Lower leg skin (tissue), 4 donors: ENCODE measurements at regions of chr7 and their contacts with region 1.

Region 1: DNA sequence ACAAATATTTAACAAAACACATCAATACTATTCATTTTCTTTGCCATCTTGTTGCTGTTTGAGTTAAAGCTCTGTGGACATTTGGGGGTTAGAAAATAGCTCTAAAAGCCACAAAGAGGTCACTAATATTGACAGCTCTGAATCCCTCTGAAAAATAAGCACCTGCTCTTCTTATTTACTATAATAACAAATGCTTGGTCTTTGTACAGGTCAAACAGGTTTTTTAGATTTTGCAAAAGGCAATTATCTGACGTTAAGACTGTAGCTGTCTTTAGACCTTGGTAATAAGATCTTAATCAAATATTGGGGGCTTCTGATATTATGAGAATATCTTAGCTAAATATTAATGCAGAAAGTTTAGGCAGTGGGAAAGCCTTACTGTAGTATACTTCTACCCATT is 20.5 kb downstream of the HEPACAM2 start:
- DNase-seq: no peak
- H3K4me3 ChIP-seq: no peak overlapping the region
- CTCF ChIP-seq: no peak
- POLR2A ChIP-seq: no peak

Region 2: GRCh38 chr7:93015779-93016481 is 189.8 kb before region 1 on chr7:
- intact Hi-C with region 1: no loop called
- DNase-seq: no peak
- H3K4me3 ChIP-seq: no peak overlapping the region
- CTCF ChIP-seq: no peak
- POLR2A ChIP-seq: no peak

Region 3: DNA sequence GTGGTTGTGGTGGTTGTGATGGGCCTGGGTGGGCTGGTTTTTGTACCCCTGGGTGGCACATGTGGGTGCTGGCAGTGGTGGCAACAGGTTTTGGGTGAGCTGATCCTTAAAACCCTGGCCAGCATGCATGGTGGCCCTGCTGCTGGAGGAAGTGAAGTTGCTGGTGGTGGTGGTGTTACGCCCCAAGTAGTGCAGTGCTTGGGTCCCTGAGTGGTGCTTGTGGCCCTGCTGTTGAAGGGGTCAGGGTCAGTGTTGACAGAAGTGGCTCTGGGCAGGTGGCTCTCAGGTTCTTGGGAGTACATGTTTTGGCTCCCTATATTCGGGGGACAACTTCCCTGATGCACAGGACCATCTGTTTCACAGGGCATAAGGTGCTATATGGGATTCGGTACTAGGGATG is 119.0 kb before region 1 on chr7:
- intact Hi-C with region 1: loop called (anchors 5 kb)
- DNase-seq: no peak
- H3K4me3 ChIP-seq: no peak overlapping the region
- CTCF ChIP-seq: no peak
- POLR2A ChIP-seq: no peak

Region 4: GRCh38 chr7:93359520-93360198 is 153.9 kb after region 1 on chr7:
- intact Hi-C with region 1: no loop called
- DNase-seq: no peak
- H3K4me3 ChIP-seq: no peak overlapping the region
- CTCF ChIP-seq: no peak
- POLR2A ChIP-seq: no peak